CD4-positive, alpha-beta memory T cell (primary cell): ENCODE measurements at regions of chrX and their contacts with region 1.

Region 1: DNA sequence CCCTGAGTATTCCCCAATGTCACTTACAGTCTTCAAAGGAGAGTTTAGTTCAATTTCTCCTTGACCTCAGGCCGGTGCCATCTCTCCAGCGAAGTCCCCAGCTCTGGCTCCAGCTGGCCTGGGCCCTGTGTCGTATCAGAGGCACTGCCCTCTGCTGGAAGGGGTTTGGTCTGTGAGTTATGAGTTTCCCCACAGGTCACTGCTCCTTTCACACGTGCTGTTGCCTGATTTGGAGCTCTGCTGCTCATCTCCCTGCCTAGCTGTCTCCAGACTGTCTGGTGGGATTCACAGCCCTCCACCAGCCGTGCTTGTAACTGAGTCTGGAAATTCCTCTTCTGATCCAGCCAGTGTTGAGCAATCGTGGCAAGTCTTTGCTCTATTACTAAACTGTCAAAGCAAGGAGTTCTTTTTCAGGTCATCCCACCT is at the start of gene RAP2C:
- DNase-seq: peak; percentile 38 to 67 (median 53)
- H3K4me3 ChIP-seq: peak within 1 kb of the TSS; percentile 36 to 68
- H3K4me3 Mint-ChIP-seq: peak within 1 kb of the TSS; percentile 73 to 96 (median 86)
- H3K27ac ChIP-seq: peak within 1 kb of the TSS; percentile 94
- H3K27ac Mint-ChIP-seq: peak within 1 kb of the TSS; percentile 89 to 99 (median 94)
- H3K4me1 ChIP-seq: peaks cover 31% of the 10 kb centered on the region
- H3K4me1 Mint-ChIP-seq: peaks cover 17 to 41% (median 21%) of the 10 kb centered on the region in 4 donors
- H3K27me3 ChIP-seq: no peaks in the 10 kb centered on the region
- H3K27me3 Mint-ChIP-seq: no peaks in the 10 kb centered on the region
- total RNA-seq, gene RAP2C: 28.2 to 30.8 TPM

Region 2: DNA sequence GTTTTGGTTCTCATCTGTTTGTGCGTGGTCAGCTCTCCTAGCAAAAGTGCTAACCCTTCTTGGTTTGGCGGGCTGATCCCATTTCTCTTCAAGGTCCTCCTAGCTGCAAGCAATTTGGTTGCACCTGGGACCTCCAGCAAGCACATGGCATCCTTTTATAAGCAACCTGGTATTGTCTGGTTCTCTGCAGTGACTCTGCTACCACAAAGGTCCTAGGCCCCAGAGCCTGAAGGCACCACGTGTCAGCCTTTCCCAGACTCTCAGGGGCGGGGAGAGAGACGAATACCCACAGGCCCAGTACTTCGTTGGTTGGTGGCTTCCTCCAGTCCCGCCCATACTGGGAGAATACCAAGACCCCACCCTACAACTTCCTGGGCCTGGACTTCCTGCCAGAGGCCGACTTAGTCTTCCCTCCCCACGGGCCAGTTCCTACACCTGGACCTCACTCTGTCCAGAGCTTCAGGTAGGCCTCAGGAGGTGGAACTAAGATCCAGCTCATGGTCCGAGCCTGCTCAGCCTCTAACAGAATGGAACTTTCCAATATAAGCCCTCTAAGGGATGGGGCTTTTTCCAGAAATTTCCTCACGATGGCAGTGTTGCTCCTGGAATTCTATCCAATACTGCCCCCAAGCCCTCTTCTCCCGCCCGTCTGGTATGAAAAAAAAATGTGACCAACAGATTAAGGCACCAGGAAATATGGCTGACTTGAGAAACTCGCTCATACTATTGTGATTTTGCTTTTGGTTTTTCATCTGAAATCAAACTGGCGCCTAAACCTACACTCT is 388.8 kb before region 1 on chrX:
- CTCF ChIA-PET with region 1: interaction called, 4 read pairs
- POLR2A ChIA-PET with region 1: no interaction called
- intact Hi-C with region 1: loop called (anchors 5 kb)
- DNase-seq: peak; percentile 48 to 76 (median 65)
- H3K4me3 ChIP-seq: peak overlapping the region in 1 of 2 donors; percentile 5
- H3K4me3 Mint-ChIP-seq: peak overlapping the region in 7 of 8 donors; percentile 1 to 79 (median 54)
- H3K27ac ChIP-seq: no peak overlapping the region
- H3K27ac Mint-ChIP-seq: peak overlapping the region; percentile 20 to 88 (median 42)
- H3K4me1 ChIP-seq: peaks cover 29% of the 10 kb centered on the region
- H3K4me1 Mint-ChIP-seq: peaks cover 8 to 35% (median 17%) of the 10 kb centered on the region in 4 donors
- H3K27me3 ChIP-seq: no peaks in the 10 kb centered on the region
- H3K27me3 Mint-ChIP-seq: no peaks in the 10 kb centered on the region

Region 3: DNA sequence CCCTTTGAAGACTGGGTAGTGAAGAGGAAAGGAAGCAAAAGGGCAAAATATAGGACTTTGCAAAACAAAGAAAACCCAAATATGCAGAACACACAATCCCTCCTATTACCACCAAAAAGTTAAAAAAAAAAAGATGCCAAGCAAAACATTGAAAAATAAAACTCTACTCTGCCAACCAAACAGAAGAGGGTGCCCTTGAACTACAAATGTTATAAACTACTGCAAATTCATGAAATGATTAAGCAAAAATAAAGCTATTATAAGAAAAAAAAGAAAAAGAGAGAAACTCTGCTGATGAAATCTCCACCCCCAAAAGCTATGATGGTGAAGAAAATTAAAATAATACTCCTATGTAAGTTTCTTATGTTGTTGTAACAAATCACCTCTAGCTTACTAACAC is 364.8 kb before region 1 on chrX:
- CTCF ChIA-PET with region 1: interaction called, 8 read pairs
- POLR2A ChIA-PET with region 1: no interaction called
- intact Hi-C with region 1: loop called (anchors 1 kb)
- DNase-seq: peak in 4 of 5 donors; percentile 26 to 33 (median 30)
- H3K4me3 ChIP-seq: no peak overlapping the region
- H3K4me3 Mint-ChIP-seq: no peak overlapping the region
- H3K27ac ChIP-seq: no peak overlapping the region
- H3K27ac Mint-ChIP-seq: no peak overlapping the region
- H3K4me1 ChIP-seq: no peaks in the 10 kb centered on the region
- H3K4me1 Mint-ChIP-seq: no peaks in the 10 kb centered on the region
- H3K27me3 ChIP-seq: no peaks in the 10 kb centered on the region
- H3K27me3 Mint-ChIP-seq: no peaks in the 10 kb centered on the region

Region 4: DNA sequence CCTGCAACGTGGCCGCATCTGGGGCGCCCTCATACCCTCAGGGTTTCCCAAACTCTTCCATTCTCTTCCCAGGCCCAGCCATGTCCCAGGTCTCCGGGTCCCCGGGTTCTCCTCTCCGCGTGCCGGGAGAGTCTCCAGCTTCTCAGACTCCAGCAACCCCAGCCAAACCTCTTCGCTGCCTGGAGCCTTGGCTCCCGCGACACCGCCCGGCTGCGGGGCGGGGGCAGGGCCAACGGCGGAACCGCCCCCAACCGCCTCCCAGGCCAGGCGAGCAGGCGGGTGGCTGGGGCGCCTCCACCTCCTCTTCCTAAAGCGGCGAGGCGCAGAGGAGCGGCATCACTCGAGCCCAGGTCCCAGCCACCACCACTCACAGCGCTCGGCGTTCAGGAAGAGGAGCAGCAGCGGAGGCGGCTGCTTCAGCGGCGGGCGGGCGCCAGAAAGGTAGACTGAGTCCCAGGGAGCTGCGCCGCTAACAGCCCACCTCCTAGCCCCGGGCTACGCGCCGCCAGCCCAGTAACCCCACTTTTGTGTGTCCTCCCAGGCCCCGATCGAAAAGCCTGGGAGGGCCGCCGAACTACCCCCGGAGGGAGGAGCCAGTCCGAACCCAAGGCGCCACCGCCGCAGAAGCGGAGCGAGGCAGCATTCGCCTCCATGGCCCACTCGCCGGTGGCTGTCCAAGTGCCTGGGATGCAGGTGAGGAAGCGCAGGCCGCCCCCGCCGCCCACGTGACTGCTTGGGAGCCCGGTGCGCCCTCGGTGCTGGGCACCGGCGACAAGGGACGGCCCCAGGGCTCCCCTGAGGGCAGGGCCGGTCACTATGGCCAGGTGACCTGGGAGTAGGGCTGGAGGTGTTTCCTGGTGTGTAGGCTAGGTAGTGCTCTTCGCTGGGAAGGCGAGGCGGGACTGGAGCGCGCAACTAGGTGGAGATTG is 196.1 kb before region 1 on chrX and contains the start of gene STK26:
- CTCF ChIA-PET with region 1: interaction called, 4 read pairs
- POLR2A ChIA-PET with region 1: interaction called, 23 read pairs
- intact Hi-C with region 1: loop called (anchors 1 kb)
- DNase-seq: peak; percentile 75 to 80 (median 78)
- H3K4me3 ChIP-seq: peak within 1 kb of the TSS; percentile 29 to 76
- H3K4me3 Mint-ChIP-seq: peak within 1 kb of the TSS; percentile 91 to 96 (median 94)
- H3K27ac ChIP-seq: peak within 1 kb of the TSS; percentile 75
- H3K27ac Mint-ChIP-seq: peak within 1 kb of the TSS; percentile 90 to 96 (median 94)
- H3K4me1 ChIP-seq: peaks cover 26% of the 10 kb centered on the region
- H3K4me1 Mint-ChIP-seq: peaks cover 12 to 38% (median 25%) of the 10 kb centered on the region in 4 donors
- H3K27me3 ChIP-seq: no peaks in the 10 kb centered on the region
- H3K27me3 Mint-ChIP-seq: no peaks in the 10 kb centered on the region
- total RNA-seq, gene STK26: 38.1 to 41.7 TPM

Region 5: DNA sequence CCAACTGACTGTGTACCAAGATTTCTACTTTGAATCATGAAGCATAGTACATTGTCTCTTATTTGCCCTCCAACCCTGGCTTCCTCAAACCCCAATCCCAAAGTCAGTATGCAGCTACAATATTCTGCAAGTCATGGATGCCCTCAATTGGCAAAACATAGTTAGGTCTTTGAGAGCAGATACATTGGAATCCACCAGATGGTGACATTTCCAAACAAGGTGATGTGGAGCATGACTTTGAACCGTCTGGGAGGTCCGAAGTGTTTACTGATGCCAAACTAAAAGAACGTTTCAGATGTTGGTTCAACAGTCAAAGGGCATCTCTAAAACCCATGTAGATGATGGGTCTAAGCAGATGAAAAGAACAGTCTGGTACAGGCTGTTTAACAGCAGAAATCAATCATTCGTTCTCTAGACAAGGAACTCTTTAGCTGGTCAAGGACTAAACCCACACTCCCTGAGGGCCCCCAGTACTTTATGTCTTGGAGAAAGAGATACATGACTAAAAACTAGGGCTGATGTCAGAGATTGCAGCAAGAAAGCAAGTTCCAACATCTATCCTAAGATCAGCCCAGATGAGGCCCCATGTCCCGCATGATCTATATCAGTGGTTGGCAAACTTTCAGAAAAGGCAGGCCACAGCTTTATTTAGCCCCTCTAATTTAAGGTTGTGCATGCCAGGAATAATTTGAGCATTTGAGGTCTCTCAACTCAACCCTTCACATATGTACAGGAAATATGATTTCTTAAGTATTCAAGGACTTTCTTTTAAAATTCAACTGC is 47.7 kb before region 1 on chrX:
- CTCF ChIA-PET with region 1: interaction called, 5 read pairs
- POLR2A ChIA-PET with region 1: no interaction called
- intact Hi-C with region 1: loop called (anchors 2 kb)
- DNase-seq: no peak
- H3K4me3 ChIP-seq: no peak overlapping the region
- H3K4me3 Mint-ChIP-seq: no peak overlapping the region
- H3K27ac ChIP-seq: no peak overlapping the region
- H3K27ac Mint-ChIP-seq: no peak overlapping the region
- H3K4me1 ChIP-seq: no peaks in the 10 kb centered on the region
- H3K4me1 Mint-ChIP-seq: no peaks in the 10 kb centered on the region
- H3K27me3 ChIP-seq: no peaks in the 10 kb centered on the region
- H3K27me3 Mint-ChIP-seq: no peaks in the 10 kb centered on the region

Region 6: DNA sequence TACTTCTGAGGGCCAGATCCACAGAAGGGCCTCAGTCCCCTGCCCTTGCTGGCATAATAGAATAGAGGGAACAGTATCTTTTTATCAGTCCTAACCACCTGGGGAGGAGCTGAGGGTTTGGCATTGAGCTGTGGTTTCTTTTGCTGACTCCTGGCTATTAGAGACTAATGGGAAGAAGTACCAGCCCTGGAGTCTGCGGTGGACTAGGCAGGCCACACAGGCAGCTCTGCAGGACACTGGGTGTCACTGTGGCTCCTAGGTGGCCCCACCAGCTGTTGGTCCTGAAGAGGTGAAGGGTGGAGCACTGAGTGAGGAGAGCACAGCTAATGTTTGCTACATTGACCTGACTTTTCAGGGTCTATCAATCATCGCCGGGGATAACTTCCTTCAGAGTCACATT is 1248.7 kb after region 1 on chrX:
- CTCF ChIA-PET with region 1: no interaction called
- POLR2A ChIA-PET with region 1: no interaction called
- intact Hi-C with region 1: no loop called
- DNase-seq: no peak
- H3K4me3 ChIP-seq: no peak overlapping the region
- H3K4me3 Mint-ChIP-seq: no peak overlapping the region
- H3K27ac ChIP-seq: no peak overlapping the region
- H3K27ac Mint-ChIP-seq: no peak overlapping the region
- H3K4me1 ChIP-seq: no peaks in the 10 kb centered on the region
- H3K4me1 Mint-ChIP-seq: no peaks in the 10 kb centered on the region
- H3K27me3 ChIP-seq: no peaks in the 10 kb centered on the region
- H3K27me3 Mint-ChIP-seq: peaks cover 5 to 7% of the 10 kb centered on the region in 2 donors